ENCODE measurements at regions of chr5 and their contacts with region 1.

Region 1: DNA sequence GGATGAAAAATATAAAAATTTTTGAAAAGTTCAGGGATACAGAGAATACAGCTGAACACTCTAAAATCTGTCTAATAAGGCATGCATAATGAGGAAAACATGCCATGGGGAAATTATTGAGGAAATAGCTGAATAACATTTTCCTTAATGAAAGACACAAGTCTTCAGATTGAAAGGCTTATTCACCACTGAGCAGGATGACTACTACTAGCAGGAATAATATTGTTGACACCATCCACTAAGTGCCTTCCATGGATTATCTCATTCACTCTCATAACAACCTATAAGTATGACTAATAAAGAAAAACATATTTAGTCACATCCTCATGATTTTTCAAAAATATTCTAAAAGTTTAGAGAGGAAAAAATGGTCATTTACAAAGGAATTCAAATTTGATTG is 96.7 kb upstream of the FER start:
- DNase-seq: peak; percentile 88
- H3K4me3 ChIP-seq: no peak overlapping the region
- H3K27ac ChIP-seq: peak overlapping the region; percentile 84
- H3K4me1 ChIP-seq: peaks cover 38% of the 10 kb centered on the region
- H3K27me3 ChIP-seq: no peaks in the 10 kb centered on the region
- CTCF ChIP-seq: no peak
- POLR2A ChIP-seq: no peak

Region 2: DNA sequence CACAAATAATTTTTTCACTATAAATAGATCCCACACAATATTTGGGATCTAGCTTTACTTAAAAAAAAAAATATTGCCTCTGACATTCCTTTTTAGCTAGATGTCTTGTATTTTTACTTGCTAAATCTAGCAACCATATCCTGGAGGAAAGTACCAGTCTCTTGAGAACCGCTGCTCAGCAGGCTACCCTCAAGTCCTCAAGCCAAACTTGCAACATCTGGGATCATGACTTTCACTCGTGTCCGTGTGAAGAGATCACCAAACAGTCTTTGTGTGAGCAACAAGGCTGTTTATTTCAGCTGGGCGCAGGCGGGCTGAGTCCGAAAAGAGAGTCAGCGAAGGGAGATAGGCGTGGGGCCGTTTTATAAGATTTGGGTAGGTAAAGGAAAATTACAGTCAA is 83.6 kb before region 1 on chr5:
- CTCF ChIA-PET with region 1: no interaction called
- POLR2A ChIA-PET with region 1: no interaction called
- dilution Hi-C with region 1: no loop called
- intact Hi-C with region 1: no loop called
- DNase-seq: no peak
- H3K4me3 ChIP-seq: no peak overlapping the region
- H3K27ac ChIP-seq: no peak overlapping the region
- H3K4me1 ChIP-seq: no peaks in the 10 kb centered on the region
- H3K27me3 ChIP-seq: no peaks in the 10 kb centered on the region
- CTCF ChIP-seq: no peak
- POLR2A ChIP-seq: no peak

Region 3: GRCh38 chr5:108661590-108662219 is 10.7 kb after region 1 on chr5:
- CTCF ChIA-PET with region 1: interaction called, 5 read pairs
- POLR2A ChIA-PET with region 1: interaction called, 3 read pairs
- dilution Hi-C with region 1: no loop called
- intact Hi-C with region 1: loop called (anchors 1 kb)
- DNase-seq: peak; percentile 72
- H3K4me3 ChIP-seq: no peak overlapping the region
- H3K27ac ChIP-seq: peak overlapping the region; percentile 71
- H3K4me1 ChIP-seq: peaks cover 13% of the 10 kb centered on the region
- H3K27me3 ChIP-seq: no peaks in the 10 kb centered on the region
- CTCF ChIP-seq: no peak
- POLR2A ChIP-seq: no peak

Region 4: DNA sequence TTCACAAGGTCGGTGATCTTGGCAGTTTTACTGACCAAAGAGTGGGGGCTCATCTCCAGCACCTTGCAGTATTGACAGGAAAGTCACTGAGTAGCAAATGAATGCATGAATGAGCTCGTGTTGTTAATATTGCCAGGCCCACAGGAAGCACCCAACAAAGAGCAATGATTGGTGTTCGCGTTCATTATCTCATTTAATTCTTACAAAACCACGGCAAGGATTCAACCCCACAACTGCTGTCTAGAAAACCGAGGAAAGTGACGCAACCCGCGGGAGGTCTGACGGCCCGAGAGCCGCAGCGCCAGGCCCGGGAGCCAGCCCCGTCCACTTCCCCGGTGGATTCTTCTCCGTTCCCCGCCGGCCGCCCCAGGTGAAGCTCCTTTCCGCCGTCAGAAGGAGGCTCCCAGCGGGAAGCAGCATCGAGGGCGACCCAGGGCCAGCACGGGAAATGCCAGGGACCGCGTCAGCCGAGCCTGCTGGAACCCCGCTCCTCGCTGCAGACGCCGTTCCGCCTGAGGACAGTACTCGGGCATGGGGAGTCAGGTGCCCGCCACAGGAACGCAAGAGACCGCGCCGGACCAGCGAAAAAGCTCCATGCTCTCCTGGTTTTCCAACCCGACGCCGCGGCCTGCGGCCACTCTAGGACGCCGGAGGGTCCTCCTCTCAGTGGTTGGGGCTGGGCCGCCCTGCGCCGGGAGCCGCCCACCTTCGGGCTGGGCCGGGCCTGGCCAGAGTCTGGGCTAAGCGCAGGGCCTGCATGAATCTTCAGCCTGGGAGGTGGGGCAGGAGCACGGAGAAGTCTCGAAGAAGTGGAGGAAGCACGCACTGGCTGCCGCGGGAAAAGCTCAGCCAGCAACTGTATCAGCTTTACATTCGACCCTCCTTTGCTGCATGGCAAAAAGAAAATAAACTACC is 76.9 kb after region 1 on chr5:
- CTCF ChIA-PET with region 1: interaction called, 4 read pairs
- POLR2A ChIA-PET with region 1: no interaction called
- dilution Hi-C with region 1: no loop called
- intact Hi-C with region 1: loop called (anchors 2 kb)
- DNase-seq: peak; percentile 92
- H3K4me3 ChIP-seq: peak overlapping the region; percentile 54 to 84 (median 71)
- H3K27ac ChIP-seq: peak overlapping the region; percentile 68
- H3K4me1 ChIP-seq: peaks cover 23% of the 10 kb centered on the region
- H3K27me3 ChIP-seq: no peaks in the 10 kb centered on the region
- CTCF ChIP-seq: no peak
- POLR2A ChIP-seq: peak; percentile 92

Region 5: GRCh38 chr5:108884736-108885135 is 233.7 kb after region 1 on chr5:
- CTCF ChIA-PET with region 1: no interaction called
- POLR2A ChIA-PET with region 1: no interaction called
- dilution Hi-C with region 1: no loop called
- intact Hi-C with region 1: loop called (anchors 5 kb)
- DNase-seq: peak; percentile 96
- H3K4me3 ChIP-seq: no peak overlapping the region
- H3K27ac ChIP-seq: peak overlapping the region; percentile 75
- H3K4me1 ChIP-seq: peaks cover 13% of the 10 kb centered on the region
- H3K27me3 ChIP-seq: no peaks in the 10 kb centered on the region
- CTCF ChIP-seq: no peak
- POLR2A ChIP-seq: no peak

Region 6: DNA sequence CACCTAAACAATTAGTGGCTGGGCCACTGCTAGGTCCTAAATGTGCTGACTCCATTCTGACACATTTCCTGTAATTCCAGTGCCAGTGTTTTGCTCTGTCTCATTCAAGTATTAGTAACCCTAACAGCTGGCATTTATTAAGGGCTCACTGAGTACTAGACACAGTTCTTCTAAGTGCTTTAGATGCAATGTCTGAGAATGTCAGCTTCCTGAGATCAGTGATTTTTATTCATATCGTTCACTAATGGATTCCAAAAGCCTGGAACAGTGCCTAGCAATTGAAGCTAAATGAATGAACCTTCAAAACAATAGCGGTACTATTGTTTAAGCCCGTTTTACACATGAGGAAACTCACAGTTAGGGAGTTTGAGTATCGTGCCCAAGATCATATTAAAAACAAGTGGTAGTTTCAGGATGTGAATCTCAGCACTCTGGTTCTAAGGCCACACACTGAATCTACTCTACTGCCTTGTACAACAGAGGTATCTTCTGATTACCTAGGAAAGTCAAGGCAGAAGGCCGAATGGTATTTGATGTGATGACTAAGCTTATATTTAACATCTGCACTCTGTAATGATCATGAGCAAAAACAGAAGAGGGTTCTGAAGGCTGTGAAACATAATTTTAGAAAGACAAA is 454.8 kb after region 1 on chr5:
- CTCF ChIA-PET with region 1: interaction called, 3 read pairs
- POLR2A ChIA-PET with region 1: no interaction called
- dilution Hi-C with region 1: no loop called
- intact Hi-C with region 1: loop called (anchors 2 kb)
- DNase-seq: peak; percentile 97
- H3K4me3 ChIP-seq: peak overlapping the region in 1 of 3 experiments; percentile 16
- H3K27ac ChIP-seq: peak overlapping the region; percentile 89
- H3K4me1 ChIP-seq: peaks cover 21% of the 10 kb centered on the region
- H3K27me3 ChIP-seq: no peaks in the 10 kb centered on the region
- CTCF ChIP-seq: no peak
- POLR2A ChIP-seq: no peak